ENCODE measurements at regions of chr1 and their contacts with region 1.

Region 1: GRCh38 chr1:230642263-230642959 is at the start of gene COG2:
- DNase-seq: peak; percentile 92 to 99 (median 96)
- ATAC-seq: peak; percentile 96
- H3K4me3 ChIP-seq: peak within 1 kb of the TSS; percentile 72 to 92
- H3K4me3 Mint-ChIP-seq: peak within 1 kb of the TSS; percentile 99
- H3K27ac ChIP-seq: peak within 1 kb of the TSS; percentile 73 to 82
- H3K27ac Mint-ChIP-seq: peak within 1 kb of the TSS; percentile 96
- H3K4me1 ChIP-seq: peaks cover 36% of the 10 kb centered on the region
- H3K4me1 Mint-ChIP-seq: peaks cover 54% of the 10 kb centered on the region
- H3K27me3 ChIP-seq: peaks cover 0 to 2% of the 10 kb centered on the region in 2 experiments
- H3K27me3 Mint-ChIP-seq: peaks cover 13% of the 10 kb centered on the region
- CTCF ChIP-seq: peak; percentile 100
- total RNA-seq, gene COG2: 20.1 to 25.7 TPM

Region 2: DNA sequence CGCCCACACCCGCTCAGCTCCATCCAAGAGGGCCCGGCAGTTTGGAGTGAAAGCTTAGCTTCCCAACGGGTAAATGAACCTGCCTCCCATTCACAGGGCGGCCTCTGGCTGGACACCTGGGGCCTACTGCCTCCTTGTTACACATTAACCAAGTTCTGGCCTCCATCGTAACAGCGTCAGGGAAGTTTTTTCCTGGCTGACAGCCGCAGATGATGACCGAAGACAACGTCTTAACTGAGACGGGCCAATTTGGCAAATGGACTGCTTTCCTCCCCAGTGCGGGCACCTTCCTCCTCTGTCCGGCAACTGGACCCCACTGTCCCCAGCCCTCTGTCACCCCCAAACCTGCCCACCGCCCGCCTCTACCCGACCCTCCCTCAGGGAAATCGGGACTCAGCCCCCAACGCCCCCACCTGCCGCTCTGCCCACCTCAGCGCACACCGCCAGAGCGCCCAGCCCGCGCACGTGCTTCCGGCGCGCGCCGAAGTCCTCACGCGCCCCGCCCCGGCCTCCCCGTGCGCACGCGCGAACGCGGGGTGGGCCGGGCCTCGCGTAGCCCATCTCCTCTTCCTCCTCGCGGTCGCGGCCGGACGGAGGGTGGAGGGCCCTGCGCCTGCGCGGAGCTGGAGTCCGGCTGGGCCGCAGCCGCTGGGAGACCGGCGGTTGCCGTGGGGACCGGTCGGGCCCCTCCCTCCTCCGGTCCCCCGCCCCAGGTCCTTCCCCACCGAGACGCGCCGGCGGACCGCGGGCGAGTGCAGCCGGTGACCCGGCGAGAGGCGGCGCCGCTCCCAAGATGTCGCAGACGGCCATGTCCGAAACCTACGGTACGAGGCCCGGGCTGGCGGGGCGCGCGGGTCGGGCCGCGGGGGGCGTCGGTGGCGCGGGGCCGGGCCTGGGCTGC is 1371.6 kb before region 1 on chr1 and contains the start of gene RAB4A:
- CTCF ChIA-PET with region 1: no interaction called
- POLR2A ChIA-PET with region 1: no interaction called
- intact Hi-C with region 1: loop called in 1 of 2 experiments (anchors 5 kb)
- DNase-seq: peak; percentile 44 to 90 (median 71)
- ATAC-seq: peak; percentile 86
- H3K4me3 ChIP-seq: peak within 1 kb of the TSS; percentile 70 to 84
- H3K4me3 Mint-ChIP-seq: peak within 1 kb of the TSS; percentile 98
- H3K27ac ChIP-seq: peak within 1 kb of the TSS; percentile 45 to 57
- H3K27ac Mint-ChIP-seq: peak within 1 kb of the TSS; percentile 83
- H3K4me1 ChIP-seq: peaks cover 31% of the 10 kb centered on the region
- H3K4me1 Mint-ChIP-seq: peaks cover 37% of the 10 kb centered on the region
- H3K27me3 ChIP-seq: no peaks in the 10 kb centered on the region
- H3K27me3 Mint-ChIP-seq: no peaks in the 10 kb centered on the region
- CTCF ChIP-seq: no peak
- total RNA-seq, gene RAB4A: 26.7 to 29.7 TPM

Region 3: DNA sequence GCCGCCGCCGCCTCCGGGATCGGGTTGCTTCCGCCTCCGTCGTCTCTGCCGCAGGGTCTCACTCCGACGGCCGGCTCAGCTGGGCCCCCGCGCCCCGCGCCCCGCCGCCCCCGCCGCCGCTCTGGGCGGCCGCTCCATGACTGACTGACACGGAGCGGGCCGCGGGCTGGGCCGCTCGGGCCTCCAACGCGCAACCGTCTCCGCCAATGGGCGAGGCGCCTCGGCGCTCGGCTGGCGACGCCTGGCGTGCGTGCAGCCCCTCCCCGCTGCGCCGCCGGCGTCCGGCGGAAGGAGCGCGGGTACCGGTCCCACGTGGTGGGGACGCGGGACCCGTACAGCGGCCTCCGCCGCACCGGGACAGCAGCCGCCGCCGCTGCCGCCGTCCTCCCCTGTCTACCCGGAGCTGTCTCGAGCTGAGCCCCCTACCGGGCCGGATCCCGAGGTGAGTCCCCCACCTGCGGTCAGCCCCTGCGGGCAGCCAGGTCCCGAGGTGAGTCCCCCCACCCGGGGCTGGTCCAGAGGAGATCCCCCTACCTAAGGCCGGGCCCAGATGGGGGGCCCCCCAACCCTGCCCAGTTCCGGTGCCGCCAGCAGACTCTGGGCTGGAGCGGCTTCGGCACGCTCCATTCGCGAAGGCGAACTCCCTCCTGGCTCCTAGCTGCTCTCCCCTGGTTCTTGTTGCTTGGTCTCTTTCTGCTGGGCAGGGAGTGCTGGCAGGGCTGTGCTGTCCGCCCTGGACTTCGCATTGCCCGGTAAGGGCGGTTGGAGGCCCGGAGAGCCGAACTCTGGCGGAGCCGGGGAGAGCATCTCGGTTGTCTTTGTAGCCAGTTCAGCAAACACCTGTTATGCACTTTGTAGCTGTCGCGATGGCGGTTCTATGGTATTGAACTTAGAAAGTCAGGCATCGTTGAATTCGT is 1016.2 kb before region 1 on chr1 and contains the starts of genes TAF5L and URB2:
- CTCF ChIA-PET with region 1: no interaction called
- POLR2A ChIA-PET with region 1: no interaction called
- intact Hi-C with region 1: loop called in 1 of 2 experiments (anchors 2 kb)
- DNase-seq: peak; percentile 60 to 94 (median 81)
- ATAC-seq: peak; percentile 90
- H3K4me3 ChIP-seq: peak within 1 kb of the TSS; percentile 92 to 95
- H3K4me3 Mint-ChIP-seq: peak within 1 kb of the TSS; percentile 99
- H3K27ac ChIP-seq: peak within 1 kb of the TSS; percentile 70 to 78
- H3K27ac Mint-ChIP-seq: peak within 1 kb of the TSS; percentile 95
- H3K4me1 ChIP-seq: peaks cover 29% of the 10 kb centered on the region
- H3K4me1 Mint-ChIP-seq: peaks cover 54% of the 10 kb centered on the region
- H3K27me3 ChIP-seq: no peaks in the 10 kb centered on the region
- H3K27me3 Mint-ChIP-seq: no peaks in the 10 kb centered on the region
- CTCF ChIP-seq: no peak
- total RNA-seq, gene TAF5L: 25.4 to 28.0 TPM
- total RNA-seq, gene URB2: 8.5 to 8.6 TPM

Region 4: DNA sequence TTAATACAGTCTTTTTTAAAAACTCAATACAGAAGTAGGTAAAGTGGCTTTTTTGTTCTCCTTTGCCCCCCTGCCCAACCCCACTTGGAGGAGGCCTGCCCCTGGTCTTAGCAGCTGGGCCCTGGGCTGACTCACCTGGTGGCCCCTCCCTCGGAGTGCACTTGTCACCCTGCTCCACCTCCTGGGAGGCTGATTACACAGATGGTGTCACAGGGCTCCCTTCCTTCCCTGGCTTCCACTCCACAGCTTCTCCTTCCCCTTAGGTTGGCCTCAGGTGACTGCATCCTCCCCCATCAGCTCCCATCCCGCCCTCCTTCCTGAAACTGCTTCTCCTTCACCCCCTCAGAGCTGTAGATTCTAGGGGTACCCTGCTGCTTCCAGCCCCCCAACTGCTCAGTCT is 93.0 kb after region 1 on chr1:
- CTCF ChIA-PET with region 1: no interaction called
- POLR2A ChIA-PET with region 1: no interaction called
- intact Hi-C with region 1: no loop called
- DNase-seq: no peak
- ATAC-seq: no peak
- H3K4me3 ChIP-seq: no peak overlapping the region
- H3K4me3 Mint-ChIP-seq: no peak overlapping the region
- H3K27ac ChIP-seq: no peak overlapping the region
- H3K27ac Mint-ChIP-seq: no peak overlapping the region
- H3K4me1 ChIP-seq: no peaks in the 10 kb centered on the region
- H3K4me1 Mint-ChIP-seq: no peaks in the 10 kb centered on the region
- H3K27me3 ChIP-seq: peaks cover 0 to 2% of the 10 kb centered on the region in 2 experiments
- H3K27me3 Mint-ChIP-seq: peaks cover 33% of the 10 kb centered on the region
- CTCF ChIP-seq: no peak

Region 5: DNA sequence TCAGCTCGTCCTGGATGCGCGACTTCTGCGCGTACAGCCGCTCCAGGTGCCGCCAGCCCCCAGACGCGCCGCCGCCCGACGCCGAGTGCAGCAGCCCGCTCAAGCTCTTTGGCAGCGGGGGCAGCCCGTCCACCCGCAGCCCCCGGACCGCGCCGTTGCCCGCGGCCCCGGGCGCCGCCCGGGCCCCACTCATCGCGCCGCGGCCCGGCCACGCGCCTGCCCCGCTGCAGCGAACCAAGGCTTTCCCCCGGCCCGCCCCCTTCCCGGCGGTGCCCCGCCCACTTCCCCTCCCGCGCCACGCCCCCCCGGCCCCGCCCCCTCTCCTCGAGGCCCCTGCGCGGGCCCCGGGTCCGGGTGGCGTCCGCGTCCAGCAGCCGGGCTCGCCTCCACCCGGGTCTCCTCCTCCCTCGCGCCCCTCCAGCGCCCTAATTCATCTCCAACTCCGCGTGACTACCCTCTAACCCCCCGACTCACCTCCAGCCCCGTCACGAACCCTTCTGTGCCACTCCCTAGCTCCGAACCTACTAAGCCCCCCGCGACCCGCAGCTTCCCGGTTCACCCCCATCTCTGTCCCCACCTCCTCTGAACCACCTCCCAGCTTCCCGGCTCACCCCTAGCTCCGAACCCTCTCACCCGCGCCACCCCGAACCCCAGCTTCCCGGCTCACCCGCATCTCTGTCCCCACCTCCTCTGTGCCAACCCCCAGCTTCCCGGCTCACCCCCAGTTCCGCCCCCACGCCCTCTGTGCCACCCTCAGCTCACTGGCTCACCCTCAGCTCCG is 397.8 kb after region 1 on chr1 and contains the start of gene FAM89A:
- CTCF ChIA-PET with region 1: no interaction called
- POLR2A ChIA-PET with region 1: no interaction called
- intact Hi-C with region 1: loop called (anchors 5 to 10 kb)
- DNase-seq: peak; percentile 44 to 86 (median 71)
- ATAC-seq: peak; percentile 72
- H3K4me3 ChIP-seq: peak within 1 kb of the TSS; percentile 81 to 83
- H3K4me3 Mint-ChIP-seq: peak within 1 kb of the TSS; percentile 83
- H3K27ac ChIP-seq: no peak within 1 kb of the TSS
- H3K27ac Mint-ChIP-seq: peak within 1 kb of the TSS; percentile 27
- H3K4me1 ChIP-seq: peaks cover 22% of the 10 kb centered on the region
- H3K4me1 Mint-ChIP-seq: peaks cover 33% of the 10 kb centered on the region
- H3K27me3 ChIP-seq: no peaks in the 10 kb centered on the region
- H3K27me3 Mint-ChIP-seq: no peaks in the 10 kb centered on the region
- CTCF ChIP-seq: no peak
- total RNA-seq, gene FAM89A: 1.4 to 2.1 TPM

Region 6: DNA sequence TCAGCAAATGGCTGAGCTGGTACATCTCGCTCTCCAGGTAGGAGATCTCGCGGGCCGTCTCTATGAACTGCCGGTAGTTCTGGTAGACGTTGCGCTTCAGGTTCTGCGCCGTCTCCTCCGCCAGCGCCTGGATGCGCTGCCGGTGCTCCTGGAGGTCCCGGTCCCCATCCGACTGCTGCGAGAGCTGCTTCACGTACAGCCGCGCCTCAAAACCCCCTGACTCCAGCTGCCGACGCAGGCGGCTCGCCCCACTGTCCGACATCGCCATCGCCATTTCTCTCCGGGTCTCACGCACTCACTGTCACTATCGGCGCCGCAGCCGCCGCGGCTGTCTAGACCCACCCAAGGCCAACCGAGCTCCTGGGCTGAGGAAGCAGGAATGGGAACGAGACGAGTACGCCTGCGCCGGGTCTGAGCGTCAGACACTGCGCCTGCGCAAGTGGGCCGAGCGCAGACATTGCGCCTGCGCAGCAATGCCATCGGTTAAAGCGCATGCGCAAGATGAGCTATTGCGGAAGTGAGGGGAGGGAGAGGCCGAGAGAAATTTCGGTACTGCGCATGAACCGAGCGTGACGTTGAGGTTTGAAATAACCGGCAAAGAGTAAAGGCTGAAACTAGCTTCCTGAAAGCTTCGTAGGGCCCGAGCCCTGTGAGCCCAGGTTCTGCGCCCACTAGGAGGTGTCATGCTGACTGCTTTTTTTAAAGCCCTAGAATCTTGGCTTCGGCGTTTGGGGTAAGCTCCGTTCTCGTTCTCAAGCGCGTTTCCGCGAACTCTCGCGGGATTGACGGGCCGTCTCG is 695.3 kb after region 1 on chr1 and contains the start of gene EXOC8:
- CTCF ChIA-PET with region 1: no interaction called
- POLR2A ChIA-PET with region 1: no interaction called
- intact Hi-C with region 1: loop called (anchors 5 kb)
- DNase-seq: peak; percentile 95 to 99 (median 98)
- ATAC-seq: peak; percentile 83
- H3K4me3 ChIP-seq: peak within 1 kb of the TSS; percentile 95 to 98
- H3K4me3 Mint-ChIP-seq: peak within 1 kb of the TSS; percentile 97
- H3K27ac ChIP-seq: peak within 1 kb of the TSS; percentile 97 to 98
- H3K27ac Mint-ChIP-seq: peak within 1 kb of the TSS; percentile 99
- H3K4me1 ChIP-seq: peaks cover 55% of the 10 kb centered on the region
- H3K4me1 Mint-ChIP-seq: peaks cover 64% of the 10 kb centered on the region
- H3K27me3 ChIP-seq: no peaks in the 10 kb centered on the region
- H3K27me3 Mint-ChIP-seq: no peaks in the 10 kb centered on the region
- CTCF ChIP-seq: no peak
- total RNA-seq, gene EXOC8: 28.8 to 28.9 TPM